Caki2 (cell line): ENCODE measurements at regions of chr6 and their contacts with region 1.

Region 1: DNA sequence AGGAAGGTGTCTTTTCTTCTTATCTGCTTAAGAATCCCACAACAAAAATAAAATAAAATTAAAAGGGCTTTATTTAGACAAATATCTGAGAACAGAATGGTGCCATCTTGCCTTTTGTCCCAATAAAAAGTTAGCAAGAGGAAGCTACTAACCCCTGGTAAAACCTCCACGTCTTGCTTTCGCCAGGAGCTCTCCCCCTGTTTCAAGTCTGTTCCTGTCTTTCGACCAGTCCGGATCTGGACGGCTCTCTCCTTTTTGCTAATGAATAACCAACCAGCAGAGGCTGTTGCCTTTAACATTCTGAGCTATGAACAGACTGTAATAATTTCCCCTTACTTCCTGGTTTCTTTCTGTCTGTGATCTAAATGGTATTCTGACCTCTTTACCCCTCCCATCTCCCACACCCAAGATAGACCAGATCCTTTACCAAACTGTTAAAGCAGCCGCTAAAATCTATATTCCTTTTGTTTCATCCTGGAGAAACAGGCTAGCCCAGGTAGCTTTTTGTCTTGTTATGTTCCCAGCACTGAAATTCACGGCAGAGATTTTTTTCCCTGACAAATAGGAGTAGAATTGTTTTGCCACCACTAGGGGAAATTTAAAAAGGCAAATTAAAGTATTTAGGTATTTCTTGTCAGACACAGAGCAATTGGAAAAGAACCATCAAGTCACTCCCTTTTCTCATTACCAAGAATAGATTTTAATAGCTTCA is at the start of gene FRK:
- DNase-seq: peak; percentile 92
- total RNA-seq, gene FRK: 5.0 and 5.1 TPM in 2 replicates

Region 2: GRCh38 chr6:116010790-116011401 is 49.8 kb before region 1 on chr6:
- in situ Hi-C with region 1: loop called (anchors 10 kb)
- DNase-seq: peak; percentile 69